ENCODE measurements at regions of chr9 and their contacts with region 1.

Region 1: DNA sequence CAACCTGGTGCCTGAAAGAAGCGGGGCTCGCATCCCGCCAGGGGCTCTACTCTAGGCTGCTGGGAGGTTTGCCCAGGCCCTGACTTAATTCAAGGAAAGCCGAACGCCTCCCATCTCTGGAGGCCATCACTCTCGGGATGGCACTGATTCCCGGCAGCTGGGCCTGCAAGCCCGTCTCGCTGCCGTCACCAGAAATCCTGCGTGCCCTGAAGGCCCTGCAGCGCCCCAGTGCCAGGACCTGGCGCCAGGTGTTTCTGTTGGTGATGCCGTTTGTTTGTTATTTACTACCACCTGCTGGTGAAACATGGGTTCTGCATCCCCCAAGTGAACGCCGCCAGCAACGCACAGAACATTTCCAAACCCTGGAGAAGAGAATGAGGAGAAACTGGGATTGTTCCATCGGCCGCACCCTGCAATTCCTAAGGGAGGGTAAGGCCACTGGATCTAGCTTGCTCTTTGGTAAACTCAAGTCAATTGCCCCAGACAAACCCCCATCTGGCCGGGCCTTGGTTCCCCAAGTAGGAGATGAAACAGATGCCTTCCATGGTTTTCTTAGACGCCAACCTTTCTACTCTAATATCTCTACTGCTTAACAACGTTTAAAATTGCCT is 77.9 kb downstream of the AK8 start:
- DNase-seq: peak; percentile 69 to 73
- ATAC-seq: peak; percentile 53 to 87 (median 66)
- H3K4me3 ChIP-seq: no peak overlapping the region
- H3K27ac ChIP-seq: no peak overlapping the region
- H3K4me1 ChIP-seq: peaks cover 7 to 27% (median 13%) of the 10 kb centered on the region in 9 donors
- H3K27me3 ChIP-seq: peaks cover 0 to 30% (median 12%) of the 10 kb centered on the region in 7 donors
- CTCF ChIP-seq: peak; percentile 78 to 92 (median 89)

Region 2: DNA sequence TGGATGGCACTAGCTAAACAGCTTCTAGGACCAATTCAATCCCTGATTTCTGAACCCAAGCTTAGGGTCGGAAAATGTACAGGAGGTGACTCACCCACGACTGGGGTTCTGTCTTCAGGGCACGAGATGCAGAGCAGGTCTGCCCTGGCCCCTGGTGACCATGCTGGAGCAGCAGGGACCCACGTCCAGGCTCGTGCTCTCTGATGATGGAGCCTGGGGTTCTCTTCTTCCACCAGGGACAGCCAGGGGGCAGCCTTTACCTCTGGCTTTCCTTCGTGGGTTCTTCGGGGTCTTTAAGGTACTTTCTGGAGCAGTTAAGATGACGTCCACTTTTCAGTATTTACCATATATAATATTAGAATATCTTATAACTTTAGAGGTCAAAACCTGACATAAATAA is 388.1 kb before region 1 on chr9:
- intact Hi-C with region 1: loop called (anchors 2 to 10 kb)
- DNase-seq: no peak
- ATAC-seq: no peak
- H3K4me3 ChIP-seq: no peak overlapping the region
- H3K27ac ChIP-seq: no peak overlapping the region
- H3K4me1 ChIP-seq: peaks cover 7 to 41% (median 28%) of the 10 kb centered on the region in 9 donors
- H3K27me3 ChIP-seq: peaks cover 0 to 78% (median 56%) of the 10 kb centered on the region in 7 donors
- CTCF ChIP-seq: peak in 8 of 9 donors; percentile 8 to 67 (median 52)

Region 3: DNA sequence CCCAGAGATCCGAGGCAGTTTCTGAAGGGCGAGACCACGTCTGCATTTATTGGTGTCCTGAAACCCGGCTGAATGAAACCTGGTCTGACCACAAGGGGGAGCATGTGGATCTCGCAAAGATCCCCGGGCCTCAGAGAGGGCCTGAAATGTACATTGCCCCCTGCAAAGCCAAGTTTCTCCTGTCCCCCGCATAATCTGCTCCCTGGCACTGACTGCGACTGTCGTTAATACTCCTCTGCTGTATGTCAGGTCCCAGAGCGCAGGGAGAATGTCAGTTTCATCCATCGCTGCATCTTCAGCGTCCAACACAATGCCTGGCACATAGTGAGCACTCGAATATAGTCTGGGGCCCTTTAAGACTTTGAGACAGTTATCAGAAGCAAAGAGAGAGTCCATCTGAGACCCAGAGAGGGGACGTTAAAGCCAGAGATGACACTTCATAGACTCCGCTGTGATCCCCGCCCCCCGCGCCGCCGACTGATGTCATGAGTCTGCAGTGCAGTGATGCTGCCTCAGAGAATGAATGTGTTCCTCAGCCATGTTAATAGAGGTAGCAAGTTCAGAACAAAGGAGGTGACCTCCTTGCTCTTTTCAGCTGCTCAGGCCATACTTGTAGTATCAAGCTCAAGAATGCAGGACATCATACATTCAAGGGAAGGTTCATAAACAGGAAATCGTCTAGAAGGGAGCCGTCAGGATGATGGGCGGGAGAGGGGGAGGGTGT is 292.2 kb before region 1 on chr9:
- intact Hi-C with region 1: loop called (anchors 1 to 5 kb)
- DNase-seq: peak; percentile 37 to 62
- ATAC-seq: peak in 6 of 8 donors; percentile 43 to 76 (median 62)
- H3K4me3 ChIP-seq: no peak overlapping the region
- H3K27ac ChIP-seq: no peak overlapping the region
- H3K4me1 ChIP-seq: peaks cover 0 to 11% (median 0%) of the 10 kb centered on the region in 9 donors
- H3K27me3 ChIP-seq: peaks cover 0 to 59% (median 31%) of the 10 kb centered on the region in 7 donors
- CTCF ChIP-seq: peak; percentile 57 to 87 (median 77)

Region 4: GRCh38 chr9:132575005-132575609 is 225.0 kb before region 1 on chr9:
- intact Hi-C with region 1: loop called in 1 of 10 experiments (anchors 5 kb)
- DNase-seq: peak; percentile 67 to 71
- ATAC-seq: peak; percentile 51 to 89 (median 86)
- H3K4me3 ChIP-seq: no peak overlapping the region
- H3K27ac ChIP-seq: no peak overlapping the region
- H3K4me1 ChIP-seq: peaks cover 0 to 5% (median 0%) of the 10 kb centered on the region in 9 donors
- H3K27me3 ChIP-seq: peaks cover 14 to 71% (median 62%) of the 10 kb centered on the region in 7 donors
- CTCF ChIP-seq: peak; percentile 45 to 85 (median 77)

Region 5: GRCh38 chr9:132694157-132694556 is 106.0 kb before region 1 on chr9:
- intact Hi-C with region 1: loop called in 3 of 10 experiments (anchors 10 kb)
- DNase-seq: no peak
- ATAC-seq: no peak
- H3K4me3 ChIP-seq: no peak overlapping the region
- H3K27ac ChIP-seq: no peak overlapping the region
- H3K4me1 ChIP-seq: no peaks in the 10 kb centered on the region
- H3K27me3 ChIP-seq: no peaks in the 10 kb centered on the region
- CTCF ChIP-seq: peak in 3 of 9 donors; percentile 20 to 27 (median 22)